ENCODE measurements at regions of chr16 and their contacts with region 1.

Region 1: DNA sequence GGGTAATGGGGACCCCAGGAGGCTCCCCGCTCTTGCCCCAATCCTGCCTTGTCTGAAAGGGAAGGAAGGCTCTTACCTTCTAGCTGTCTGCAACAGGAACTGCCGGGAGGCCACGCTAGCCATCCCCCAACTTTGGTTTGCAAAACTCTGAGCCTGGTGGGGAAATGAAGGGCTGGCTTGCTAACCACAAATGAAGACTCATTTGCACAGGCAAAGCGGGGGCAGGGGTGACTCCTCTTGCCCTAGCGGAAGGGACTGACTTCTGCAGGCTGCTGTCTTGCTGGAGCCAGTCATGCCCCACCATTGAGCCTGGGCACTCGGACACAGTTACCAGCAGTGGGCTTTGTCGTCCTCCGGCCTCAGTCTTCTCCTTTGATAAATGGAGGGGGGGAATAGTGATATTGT is 52.6 kb downstream of the PLCG2 start:
- DNase-seq: no peak
- H3K27ac ChIP-seq: no peak overlapping the region
- CTCF ChIP-seq: no peak

Region 2: DNA sequence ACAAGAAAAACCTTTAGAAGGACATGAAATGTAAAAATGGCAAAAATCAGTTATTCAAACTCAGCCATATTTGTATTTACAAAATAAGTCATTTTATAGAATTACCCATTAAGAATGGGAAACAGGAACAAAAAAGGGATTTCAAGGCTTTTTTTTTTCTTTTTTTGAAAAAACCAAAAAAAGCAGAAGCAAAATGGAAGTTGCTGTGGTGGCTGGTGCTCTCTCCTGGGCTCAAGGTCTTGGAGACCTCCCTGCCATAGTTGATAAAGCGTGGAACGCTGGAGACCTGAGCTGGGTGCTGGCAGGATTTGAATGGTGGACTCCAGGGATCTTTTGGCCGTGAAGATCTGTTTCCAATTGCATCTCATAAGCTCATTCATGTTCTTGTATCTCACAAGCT is 49.5 kb before region 1 on chr16:
- CTCF ChIA-PET with region 1: no interaction called
- POLR2A ChIA-PET with region 1: interaction called, 15 read pairs
- DNase-seq: no peak
- H3K27ac ChIP-seq: no peak overlapping the region
- CTCF ChIP-seq: no peak

Measured in RWPE1 (cell line).